GM10248 (cell line): ENCODE measurements at regions of chr22 and their contacts with region 1.

Region 1: GRCh38 chr22:22498267-22498666 is 10.3 kb downstream of the ZNF280B start:
- DNase-seq: no peak
- CTCF ChIP-seq: no peak

Region 2: DNA sequence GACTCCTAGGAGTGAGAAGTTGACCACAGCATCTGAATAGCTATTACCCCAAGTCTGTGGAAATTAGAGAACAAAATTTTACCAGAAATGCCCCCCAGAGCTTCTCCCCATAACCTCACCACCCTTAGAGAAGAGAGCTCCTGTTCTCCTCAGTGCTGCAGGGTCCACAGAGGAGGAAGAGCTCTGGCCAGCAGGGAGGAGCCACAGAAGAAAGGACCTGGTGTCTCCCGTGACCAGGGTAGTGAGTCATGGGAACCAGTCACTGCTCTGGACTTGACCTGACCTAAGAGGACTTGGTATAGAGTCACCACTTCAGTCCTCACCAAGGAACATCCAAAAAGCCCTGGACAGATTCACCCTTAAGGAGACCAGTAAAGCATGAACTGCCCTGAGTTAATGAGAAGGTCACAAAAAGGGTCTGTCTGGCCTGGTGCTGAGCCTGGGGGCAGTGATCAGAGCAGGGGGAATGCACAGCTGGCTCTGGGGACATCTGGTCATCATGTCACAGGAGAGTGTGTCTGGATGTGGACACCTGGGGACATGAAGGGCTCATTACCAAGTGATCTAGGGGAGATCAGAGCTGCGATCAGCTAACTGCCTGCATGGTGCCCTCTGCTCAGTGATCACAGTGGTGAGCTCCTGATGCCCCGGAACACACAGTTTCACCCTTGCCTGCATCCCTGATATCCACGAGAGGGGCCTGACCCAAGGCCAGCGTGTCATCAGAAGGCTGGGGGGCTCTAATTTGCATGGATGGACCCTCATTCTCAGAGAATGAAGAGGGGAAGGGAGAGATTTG is 412.4 kb before region 1 on chr22:
- CTCF ChIA-PET with region 1: no interaction called
- POLR2A ChIA-PET with region 1: interaction called, 13 read pairs
- DNase-seq: no peak
- CTCF ChIP-seq: no peak